Activated CD8-positive, alpha-beta T cell treated with anti-CD3 and anti-CD28 coated beads for 36 hours (primary cell): ENCODE measurements at regions of chr14 and their contacts with region 1.

Region 1: DNA sequence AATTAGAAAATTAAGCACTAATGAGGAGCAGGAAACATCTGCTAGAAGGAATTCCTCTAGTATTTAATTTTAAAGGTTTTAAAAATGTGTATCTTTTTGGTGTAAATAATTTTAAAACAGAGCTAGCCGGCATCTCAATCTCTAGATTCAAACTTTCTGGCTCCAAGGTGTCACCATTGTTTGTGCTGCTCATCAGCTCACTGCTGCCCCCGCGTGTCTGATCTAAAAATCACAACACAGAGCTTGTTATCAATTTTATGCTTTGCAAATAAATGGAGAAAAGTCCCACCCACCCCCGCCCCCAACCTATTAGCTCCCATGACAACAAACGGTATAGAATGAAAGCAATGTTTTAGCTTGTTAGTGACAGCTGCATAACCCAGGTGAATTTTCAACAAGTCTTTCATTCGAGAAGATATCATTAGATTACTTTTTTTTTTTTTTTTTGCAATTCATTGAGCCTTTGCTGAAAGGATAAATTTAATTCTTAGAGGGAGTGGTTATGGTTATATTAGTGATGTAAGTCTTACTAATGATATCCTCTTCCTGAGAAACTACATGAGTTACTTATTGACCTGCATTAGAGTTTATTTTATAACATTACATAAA is 11.3 kb upstream of the ABHD12B start:
- DNase-seq: peak; percentile 97
- ATAC-seq: peak; percentile 79
- H3K4me3 Mint-ChIP-seq: peak overlapping the region; percentile 79
- H3K27ac Mint-ChIP-seq: peak overlapping the region; percentile 78
- H3K4me1 Mint-ChIP-seq: peaks cover 10% of the 10 kb centered on the region
- H3K27me3 Mint-ChIP-seq: no peaks in the 10 kb centered on the region
- CTCF ChIP-seq: peak; percentile 91

Region 2: DNA sequence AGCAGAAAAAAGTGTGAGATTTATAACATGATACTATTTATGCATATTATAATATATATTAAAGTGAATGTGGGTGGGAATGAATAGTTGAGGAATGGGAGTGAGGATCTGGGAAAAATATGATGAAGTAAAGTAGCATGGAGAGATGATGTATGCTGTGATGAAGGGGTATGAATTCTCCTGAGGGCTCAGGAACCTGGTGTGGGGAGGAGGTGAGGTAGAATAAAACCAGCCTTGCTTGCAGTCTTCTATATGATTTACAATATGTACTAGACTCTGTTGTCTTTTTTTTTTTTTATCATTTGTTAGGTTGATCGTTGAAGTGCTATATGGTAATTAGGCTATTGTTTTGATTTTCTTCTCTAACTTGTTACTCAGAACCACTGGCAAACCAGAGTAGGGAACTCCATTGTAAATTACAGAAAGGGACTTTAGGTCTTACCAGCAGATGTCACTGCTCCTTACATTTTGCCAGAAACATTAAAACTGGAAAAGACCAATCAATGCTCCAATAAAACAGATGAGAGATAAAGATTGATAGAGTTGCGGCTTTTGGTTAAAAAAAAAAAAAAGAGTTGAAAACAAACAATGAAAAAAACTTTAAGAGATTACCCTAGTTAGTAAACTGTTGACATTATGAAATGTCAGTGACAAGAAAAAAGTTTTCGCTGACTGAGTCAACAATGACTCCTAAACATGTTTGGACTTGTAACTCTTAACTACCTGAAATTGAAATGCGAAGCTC is 260.7 kb before region 1 on chr14:
- CTCF ChIA-PET with region 1: interaction called, 18 read pairs
- POLR2A ChIA-PET with region 1: no interaction called
- intact Hi-C with region 1: loop called (anchors 10 kb)
- DNase-seq: no peak
- ATAC-seq: peak; percentile 39
- H3K4me3 Mint-ChIP-seq: no peak overlapping the region
- H3K27ac Mint-ChIP-seq: no peak overlapping the region
- H3K4me1 Mint-ChIP-seq: no peaks in the 10 kb centered on the region
- H3K27me3 Mint-ChIP-seq: no peaks in the 10 kb centered on the region
- CTCF ChIP-seq: peak; percentile 45

Region 3: DNA sequence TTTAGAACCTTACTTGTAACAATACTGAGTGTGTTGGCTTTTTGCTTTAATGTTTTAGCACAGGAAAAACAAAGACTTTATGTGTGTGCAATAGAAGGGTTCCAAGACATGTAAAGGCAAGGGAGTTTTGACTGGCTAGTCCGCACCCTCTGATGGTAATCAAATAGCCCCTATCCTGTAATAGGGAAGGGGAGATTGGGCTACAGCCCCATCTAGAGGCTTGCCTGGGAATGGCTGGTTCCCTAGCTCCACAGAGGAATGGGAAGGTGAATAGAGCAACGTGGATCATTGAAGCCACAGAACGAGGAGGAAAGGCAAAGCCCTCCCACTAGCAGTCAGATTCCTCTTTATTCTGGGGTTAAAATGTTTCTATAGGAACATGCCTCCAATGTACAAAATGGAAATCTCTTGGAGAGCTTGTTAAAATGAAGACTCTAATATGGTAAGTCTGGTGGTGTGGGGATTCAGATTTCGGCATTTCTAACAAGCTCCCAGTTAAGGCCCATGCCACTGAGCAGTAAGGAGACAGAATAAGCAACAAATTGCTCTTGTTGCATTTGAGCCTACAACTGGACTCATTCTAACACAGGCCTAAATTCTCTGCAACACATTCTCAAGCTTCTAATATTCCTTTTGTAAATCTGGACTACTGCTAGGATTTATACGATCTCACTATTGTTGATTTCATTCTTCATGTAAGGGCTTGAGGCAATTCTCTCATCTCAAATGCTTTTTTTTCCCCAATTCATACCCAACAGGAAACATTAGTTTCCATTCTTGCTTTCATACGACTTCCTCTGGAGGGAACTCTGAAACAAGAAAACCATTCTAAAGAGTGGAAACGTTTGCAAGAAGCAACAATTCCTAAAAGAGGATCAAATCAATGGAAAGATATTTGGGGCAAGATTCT is 86.7 kb before region 1 on chr14:
- CTCF ChIA-PET with region 1: interaction called, 160 read pairs
- POLR2A ChIA-PET with region 1: interaction called, 4 read pairs
- intact Hi-C with region 1: no loop called
- DNase-seq: peak; percentile 59
- ATAC-seq: peak; percentile 73
- H3K4me3 Mint-ChIP-seq: no peak overlapping the region
- H3K27ac Mint-ChIP-seq: peak overlapping the region; percentile 36
- H3K4me1 Mint-ChIP-seq: peaks cover 34% of the 10 kb centered on the region
- H3K27me3 Mint-ChIP-seq: no peaks in the 10 kb centered on the region
- CTCF ChIP-seq: peak; percentile 87

Region 4: GRCh38 chr14:50804181-50804721 is 56.3 kb before region 1 on chr14:
- CTCF ChIA-PET with region 1: interaction called, 25 read pairs
- POLR2A ChIA-PET with region 1: interaction called, 3 read pairs
- intact Hi-C with region 1: no loop called
- DNase-seq: no peak
- ATAC-seq: no peak
- H3K4me3 Mint-ChIP-seq: no peak overlapping the region
- H3K27ac Mint-ChIP-seq: peak overlapping the region; percentile 28
- H3K4me1 Mint-ChIP-seq: peaks cover 51% of the 10 kb centered on the region
- H3K27me3 Mint-ChIP-seq: no peaks in the 10 kb centered on the region
- CTCF ChIP-seq: no peak

Region 5: GRCh38 chr14:50830932-50831725 is 29.5 kb before region 1 on chr14 and contains the start of gene NIN:
- CTCF ChIA-PET with region 1: interaction called, 114 read pairs
- POLR2A ChIA-PET with region 1: interaction called, 4 read pairs
- intact Hi-C with region 1: loop called (anchors 1 kb)
- DNase-seq: peak; percentile 80
- ATAC-seq: peak; percentile 86
- H3K4me3 Mint-ChIP-seq: peak within 1 kb of the TSS; percentile 87
- H3K27ac Mint-ChIP-seq: peak within 1 kb of the TSS; percentile 93
- H3K4me1 Mint-ChIP-seq: peaks cover 54% of the 10 kb centered on the region
- H3K27me3 Mint-ChIP-seq: no peaks in the 10 kb centered on the region
- CTCF ChIP-seq: no peak
- total RNA-seq, gene NIN: 71.9 to 72.8 TPM